ENCODE measurements at regions of chr9 and their contacts with region 1.

Region 1: DNA sequence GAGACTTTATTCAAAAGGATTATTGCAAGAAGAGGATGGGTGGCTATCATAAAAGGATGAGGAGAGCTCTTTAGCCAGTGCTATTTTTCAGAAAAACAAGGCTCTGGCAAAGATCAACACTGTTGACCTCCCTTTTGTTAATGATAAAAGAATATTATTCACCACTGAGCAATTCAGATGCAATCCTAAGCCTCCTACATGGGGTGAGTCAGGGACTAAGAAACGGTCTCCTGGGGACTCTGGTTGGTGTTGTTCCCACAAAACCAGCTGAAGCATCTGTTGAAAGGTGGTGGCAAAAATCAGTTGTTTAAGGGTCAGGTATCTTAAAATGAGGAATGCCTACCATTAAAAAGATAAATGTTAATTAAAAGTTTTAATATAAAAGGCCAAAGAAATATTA is 7.7 kb upstream of the GCNT1 start:
- DNase-seq: no peak
- H3K4me3 Mint-ChIP-seq: no peak overlapping the region
- H3K27ac Mint-ChIP-seq: no peak overlapping the region
- H3K4me1 Mint-ChIP-seq: peaks cover 5% of the 10 kb centered on the region
- H3K27me3 Mint-ChIP-seq: no peaks in the 10 kb centered on the region
- CTCF ChIP-seq: no peak

Region 2: DNA sequence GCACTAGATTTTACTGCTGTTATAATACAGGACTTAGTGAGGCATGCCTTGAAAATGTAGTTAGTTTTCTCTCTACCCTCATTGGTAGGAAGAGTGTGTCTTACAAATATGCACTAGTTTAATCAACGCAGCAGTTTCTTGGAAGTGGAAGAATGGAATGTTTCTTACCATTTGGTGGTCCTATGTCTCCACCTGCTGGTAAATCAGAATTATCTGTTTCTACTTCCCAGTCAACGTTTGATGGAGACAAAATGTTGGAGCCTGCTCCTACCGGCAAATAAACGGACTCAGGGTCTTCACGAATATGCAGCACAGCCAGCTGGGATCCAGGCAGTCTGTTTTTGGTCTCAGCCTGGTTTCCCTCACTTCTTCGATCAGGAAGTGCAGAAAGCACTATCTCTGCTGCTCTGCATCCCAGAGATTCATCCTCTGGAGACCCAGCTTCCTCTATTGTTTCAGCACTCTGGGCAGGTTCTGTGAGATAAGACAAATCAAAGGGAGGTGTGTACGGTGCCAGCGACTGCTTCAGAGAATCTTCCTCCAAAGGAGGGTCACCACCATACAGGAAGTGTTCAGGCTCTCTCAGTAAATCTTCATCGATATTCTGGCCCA is 253.5 kb after region 1 on chr9:
- CTCF ChIA-PET with region 1: no interaction called
- intact Hi-C with region 1: loop called (anchors 1 kb)
- DNase-seq: peak; percentile 35
- H3K4me3 Mint-ChIP-seq: no peak overlapping the region
- H3K27ac Mint-ChIP-seq: no peak overlapping the region
- H3K4me1 Mint-ChIP-seq: no peaks in the 10 kb centered on the region
- H3K27me3 Mint-ChIP-seq: peaks cover 63% of the 10 kb centered on the region
- CTCF ChIP-seq: peak; percentile 53

Measured in Calu3 (cell line).